ENCODE measurements at regions of chr5 and their contacts with region 1.

Region 1: GRCh38 chr5:143386725-143387124 is 16.8 kb downstream of the NR3C1 start:
- DNase-seq: peak; percentile 59
- ATAC-seq: peak; percentile 89
- H3K4me3 Mint-ChIP-seq: no peak overlapping the region
- H3K27ac Mint-ChIP-seq: peak overlapping the region; percentile 24
- H3K4me1 Mint-ChIP-seq: peaks cover 86% of the 10 kb centered on the region
- H3K27me3 Mint-ChIP-seq: no peaks in the 10 kb centered on the region
- CTCF ChIP-seq: no peak

Region 2: DNA sequence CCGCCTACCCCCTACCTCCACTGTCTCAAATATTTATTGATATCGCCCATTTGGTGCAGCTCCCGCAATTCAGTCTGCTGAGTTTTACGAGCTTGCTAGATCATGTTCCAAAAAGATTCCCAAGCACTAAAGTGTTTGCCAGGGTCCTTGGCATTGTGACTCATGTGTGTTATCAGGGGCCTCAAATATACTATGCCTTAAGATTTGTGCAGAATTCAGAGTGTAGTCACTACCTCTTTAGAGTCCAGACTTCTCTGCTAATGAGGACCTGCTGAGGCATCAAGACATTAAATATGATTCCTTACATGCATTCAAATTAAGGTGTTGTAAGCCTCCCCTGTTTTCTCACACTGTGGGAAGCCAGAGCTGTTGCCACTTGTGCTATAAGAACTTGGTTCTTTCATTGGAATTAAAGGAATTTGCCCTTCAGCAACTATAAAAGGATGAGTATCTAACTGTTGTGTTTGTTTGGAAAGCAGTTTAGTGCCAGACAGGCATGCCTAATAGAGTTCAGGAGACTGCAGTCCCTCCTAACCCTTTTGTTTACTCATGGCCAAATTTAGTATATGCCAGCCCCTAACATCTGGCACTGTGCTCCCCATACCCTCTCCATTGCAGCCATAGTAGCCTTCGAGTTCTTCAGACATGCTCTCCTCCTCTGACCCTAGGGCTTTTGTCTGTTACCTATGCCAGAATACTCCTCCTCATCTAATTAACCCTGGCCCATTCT is 299.7 kb before region 1 on chr5:
- CTCF ChIA-PET with region 1: no interaction called
- POLR2A ChIA-PET with region 1: no interaction called
- intact Hi-C with region 1: no loop called
- DNase-seq: no peak
- ATAC-seq: no peak
- H3K4me3 Mint-ChIP-seq: no peak overlapping the region
- H3K27ac Mint-ChIP-seq: no peak overlapping the region
- H3K4me1 Mint-ChIP-seq: peaks cover 6% of the 10 kb centered on the region
- H3K27me3 Mint-ChIP-seq: no peaks in the 10 kb centered on the region
- CTCF ChIP-seq: no peak

Region 3: DNA sequence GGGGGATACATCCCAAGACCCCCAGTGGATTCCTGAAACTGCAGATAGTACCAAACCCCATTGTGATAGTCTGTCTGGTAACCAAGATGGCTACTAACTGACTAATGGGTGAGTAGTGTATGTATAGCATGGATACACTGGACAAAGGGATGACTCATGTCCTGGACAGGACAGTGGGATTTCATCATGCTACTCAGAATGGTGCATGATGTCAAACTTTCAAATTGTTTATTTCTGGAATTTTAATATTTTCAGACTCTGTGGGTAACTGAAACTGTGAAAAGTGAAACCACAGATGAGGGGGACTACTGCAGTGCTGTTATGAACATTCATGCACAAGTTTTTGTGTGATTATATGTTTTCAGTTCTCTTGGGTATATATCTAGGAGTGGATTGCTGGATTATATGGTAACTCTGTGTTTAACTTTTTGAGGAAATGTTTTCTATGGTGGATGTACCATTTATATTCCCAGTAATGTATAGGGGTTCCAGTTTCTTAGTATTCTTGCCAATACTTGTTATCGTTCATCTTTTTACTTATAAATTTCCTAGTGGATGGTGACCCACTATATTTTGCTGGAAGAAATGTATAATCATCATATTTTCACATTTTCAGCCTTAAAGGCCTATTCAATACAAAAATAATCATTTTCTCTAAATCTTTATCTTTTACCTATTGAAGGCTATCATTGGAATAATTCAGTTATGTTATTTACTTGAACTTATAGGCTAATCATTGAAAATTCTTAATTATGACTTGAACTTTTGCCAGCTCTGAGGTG is 124.1 kb before region 1 on chr5:
- CTCF ChIA-PET with region 1: no interaction called
- POLR2A ChIA-PET with region 1: no interaction called
- intact Hi-C with region 1: no loop called
- DNase-seq: no peak
- ATAC-seq: peak; percentile 77
- H3K4me3 Mint-ChIP-seq: no peak overlapping the region
- H3K27ac Mint-ChIP-seq: no peak overlapping the region
- H3K4me1 Mint-ChIP-seq: peaks cover 12% of the 10 kb centered on the region
- H3K27me3 Mint-ChIP-seq: no peaks in the 10 kb centered on the region
- CTCF ChIP-seq: no peak

Region 4: DNA sequence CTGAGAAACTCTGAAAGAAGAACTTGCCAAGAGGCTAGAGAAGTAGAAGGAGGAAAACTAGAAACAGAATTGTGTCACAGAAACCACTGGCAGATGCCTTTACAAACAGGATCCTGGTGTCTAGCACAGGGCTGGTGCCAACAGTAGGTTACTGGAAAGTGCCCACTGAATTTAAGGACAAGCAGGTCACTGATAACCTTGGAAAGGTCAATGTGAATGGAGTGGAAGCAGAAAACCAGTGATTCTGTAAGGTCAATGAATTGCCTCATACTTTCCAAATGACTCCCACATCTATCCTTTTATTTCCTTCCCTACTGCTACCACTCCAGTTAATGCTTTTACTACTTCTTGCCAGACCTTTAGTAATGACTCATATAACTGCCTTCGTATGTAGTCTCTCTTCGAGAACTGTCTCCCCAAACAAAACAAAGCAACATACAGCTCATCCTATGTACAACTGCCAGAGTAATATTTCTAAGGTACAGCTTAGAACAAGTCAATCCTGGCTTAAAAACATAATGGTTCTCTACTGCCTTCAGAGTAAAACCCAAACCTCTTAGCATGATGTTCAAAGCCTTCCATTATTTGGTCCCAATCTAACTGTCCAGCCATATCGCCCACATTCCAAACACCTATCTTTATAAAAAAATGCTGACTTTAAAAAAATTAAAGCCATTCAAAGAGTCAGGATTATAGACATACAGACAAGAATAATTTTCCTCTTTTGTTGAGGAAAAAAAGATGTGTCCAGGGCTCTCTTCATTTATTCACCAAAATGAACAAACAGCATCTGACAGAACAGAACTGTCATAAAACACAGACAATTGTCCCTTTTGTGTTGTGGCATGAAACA is 35.7 kb before region 1 on chr5:
- CTCF ChIA-PET with region 1: interaction called, 3 read pairs
- POLR2A ChIA-PET with region 1: interaction called, 4 read pairs
- intact Hi-C with region 1: loop called (anchors 5 kb)
- DNase-seq: no peak
- ATAC-seq: peak; percentile 79
- H3K4me3 Mint-ChIP-seq: no peak overlapping the region
- H3K27ac Mint-ChIP-seq: no peak overlapping the region
- H3K4me1 Mint-ChIP-seq: peaks cover 58% of the 10 kb centered on the region
- H3K27me3 Mint-ChIP-seq: no peaks in the 10 kb centered on the region
- CTCF ChIP-seq: no peak

Region 5: GRCh38 chr5:143434261-143435209 is 47.8 kb after region 1 on chr5:
- CTCF ChIA-PET with region 1: no interaction called
- POLR2A ChIA-PET with region 1: no interaction called
- intact Hi-C with region 1: no loop called
- DNase-seq: peak; percentile 62
- ATAC-seq: peak; percentile 66
- H3K4me3 Mint-ChIP-seq: peak overlapping the region; percentile 86
- H3K27ac Mint-ChIP-seq: peak overlapping the region; percentile 98
- H3K4me1 Mint-ChIP-seq: peaks cover 68% of the 10 kb centered on the region
- H3K27me3 Mint-ChIP-seq: no peaks in the 10 kb centered on the region
- CTCF ChIP-seq: no peak

Region 6: GRCh38 chr5:143471041-143471521 is 84.4 kb after region 1 on chr5:
- CTCF ChIA-PET with region 1: no interaction called
- POLR2A ChIA-PET with region 1: no interaction called
- intact Hi-C with region 1: no loop called
- DNase-seq: no peak
- ATAC-seq: no peak
- H3K4me3 Mint-ChIP-seq: no peak overlapping the region
- H3K27ac Mint-ChIP-seq: no peak overlapping the region
- H3K4me1 Mint-ChIP-seq: no peaks in the 10 kb centered on the region
- H3K27me3 Mint-ChIP-seq: peaks cover 1% of the 10 kb centered on the region
- CTCF ChIP-seq: no peak

Measured in activated CD8-positive, alpha-beta T cell treated with anti-CD3 and anti-CD28 coated beads for 36 hours (primary cell).